Naive thymus-derived CD8-positive, alpha-beta T cell (primary cell): ENCODE measurements at regions of chr2 and their contacts with region 1.

Region 1: DNA sequence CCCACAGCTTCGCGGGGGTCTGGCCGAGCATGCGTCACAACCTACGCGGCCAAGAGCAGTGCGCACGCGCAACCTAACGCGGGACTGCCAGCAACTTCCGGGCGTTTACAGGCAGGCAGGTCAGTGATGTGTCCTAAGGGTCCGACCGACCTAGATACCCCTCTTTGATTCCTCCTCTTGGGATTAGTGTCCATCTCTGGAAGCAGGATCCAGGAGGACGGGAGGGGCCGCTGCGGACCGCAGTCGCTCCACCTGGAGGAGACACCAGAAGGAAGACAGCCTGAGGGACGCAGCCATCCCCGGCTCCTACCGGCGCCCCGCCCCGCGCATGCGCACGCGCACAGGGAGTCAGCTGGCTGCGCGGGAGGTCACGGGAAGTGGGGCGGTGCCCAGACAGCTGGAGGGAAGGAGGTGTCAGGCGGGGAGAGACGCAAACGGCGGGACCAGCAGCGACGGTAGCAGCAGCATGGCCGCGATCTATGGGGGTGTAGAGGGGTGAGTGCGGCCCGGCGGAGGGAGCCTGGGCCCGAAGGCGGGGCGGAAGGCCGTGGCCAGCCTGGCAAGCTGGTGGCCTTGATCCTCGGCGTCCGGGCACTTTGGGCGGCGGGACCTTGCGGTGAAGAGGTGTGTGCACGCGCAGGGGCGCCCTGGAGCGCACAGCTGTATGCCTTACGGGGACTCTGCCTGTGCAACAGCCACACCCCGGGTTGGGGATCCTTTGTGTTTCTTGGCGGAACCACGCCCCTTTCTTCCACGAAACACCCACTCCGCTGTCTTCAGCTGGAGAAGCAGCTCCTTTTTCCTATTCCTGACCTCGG is at the start of gene NAGK:
- DNase-seq: peak; percentile 96 to 100 (median 98)
- ATAC-seq: peak; percentile 81 to 85
- H3K4me3 Mint-ChIP-seq: peak within 1 kb of the TSS; percentile 90 to 99 (median 94)
- H3K27ac Mint-ChIP-seq: peak within 1 kb of the TSS; percentile 98 to 100 (median 99)
- H3K4me1 Mint-ChIP-seq: peaks cover 27 to 84% (median 62%) of the 10 kb centered on the region in 4 donors
- H3K27me3 Mint-ChIP-seq: peaks cover 0 to 1% (median 0%) of the 10 kb centered on the region in 5 donors
- polyA plus RNA-seq, gene NAGK: 33.7 to 51.1 (median 43.6) TPM

Region 2: DNA sequence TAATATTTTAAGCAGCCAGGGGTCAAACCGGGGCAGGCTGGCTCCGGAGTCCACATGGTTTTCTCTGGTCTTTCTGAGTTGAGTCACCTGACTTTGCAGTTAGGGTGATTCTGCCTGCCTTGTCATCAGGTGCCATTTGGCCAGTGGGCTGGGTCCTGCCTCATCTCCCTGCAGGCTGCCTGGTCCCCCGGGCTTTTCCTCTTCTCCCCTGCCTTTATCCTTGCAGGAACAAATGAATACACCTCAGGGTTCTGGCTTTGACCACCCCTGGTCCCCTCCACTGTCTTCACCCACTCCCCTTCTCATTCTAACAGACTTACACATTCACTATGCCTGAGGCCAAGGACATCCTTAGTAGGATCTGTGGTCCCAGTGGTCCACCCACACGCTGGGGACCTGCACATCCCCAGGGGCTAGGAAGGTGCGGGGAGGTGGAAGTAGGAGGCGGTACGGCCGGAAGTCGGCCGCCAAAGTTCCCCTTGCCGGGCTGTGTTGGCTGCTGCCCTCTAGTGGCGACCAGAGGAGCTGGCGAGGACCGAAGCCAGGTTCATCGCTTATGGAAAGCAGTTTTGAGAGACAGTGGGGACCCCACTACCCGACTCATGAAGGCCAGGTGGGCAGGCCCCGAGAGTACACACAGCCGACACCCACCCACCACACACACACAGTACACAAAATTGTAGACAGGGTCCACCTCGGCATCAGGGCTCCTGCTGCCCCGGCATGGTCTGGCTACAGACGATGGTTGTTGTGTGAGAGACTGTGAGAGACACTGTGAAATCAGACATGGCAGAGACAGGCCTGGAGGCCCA is 67.4 kb before region 1 on chr2:
- POLR2A ChIA-PET with region 1: interaction called, 11 read pairs
- DNase-seq: peak; percentile 65 to 87 (median 78)
- ATAC-seq: peak; percentile 96 to 99
- H3K4me3 Mint-ChIP-seq: peak overlapping the region; percentile 3 to 76 (median 53)
- H3K27ac Mint-ChIP-seq: peak overlapping the region in 9 of 10 donors; percentile 43 to 91 (median 80)
- H3K4me1 Mint-ChIP-seq: peaks cover 0 to 12% (median 7%) of the 10 kb centered on the region in 4 donors
- H3K27me3 Mint-ChIP-seq: peaks cover 1 to 8% (median 6%) of the 10 kb centered on the region in 5 donors

Region 3: DNA sequence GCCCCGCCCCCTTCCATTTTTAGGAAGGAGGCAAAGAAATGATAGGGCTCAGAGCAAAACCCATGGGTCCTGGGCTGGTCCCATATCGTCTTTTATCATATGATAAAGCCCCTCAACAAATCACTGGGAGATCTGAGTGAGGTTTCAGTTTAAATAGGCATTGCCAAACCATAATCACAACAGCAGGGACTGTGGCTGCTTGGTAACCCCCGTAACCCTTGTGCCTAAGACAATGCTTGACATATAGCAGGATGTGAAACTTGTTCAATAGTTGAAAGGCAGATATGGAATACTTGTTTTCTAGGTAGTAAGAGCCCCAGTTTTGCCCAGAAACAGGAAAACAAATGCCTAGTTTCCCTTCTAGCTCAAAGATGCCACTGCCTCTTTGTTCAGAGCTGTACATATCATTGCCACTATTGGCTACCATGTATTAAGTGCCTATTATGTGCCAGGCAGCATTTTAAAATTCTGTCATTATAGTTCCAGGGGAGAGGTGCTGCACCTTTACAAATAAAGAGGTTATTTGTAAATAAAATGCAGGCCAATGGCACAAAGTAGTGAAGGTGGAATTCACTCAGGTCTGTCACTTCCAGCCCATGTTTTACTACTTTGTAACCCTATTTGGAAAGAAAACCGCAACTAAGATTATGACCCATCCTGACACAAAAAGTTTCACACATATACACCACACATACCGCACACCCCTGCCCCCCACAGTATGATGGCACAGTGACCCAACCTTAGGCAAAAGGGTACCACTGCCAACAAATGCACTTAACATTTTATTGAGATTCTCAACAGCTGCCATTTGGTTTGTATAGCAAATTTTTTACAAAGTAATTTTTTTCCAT is 14.2 kb after region 1 on chr2:
- POLR2A ChIA-PET with region 1: interaction called, 15 read pairs
- DNase-seq: no peak
- ATAC-seq: no peak
- H3K4me3 Mint-ChIP-seq: peak overlapping the region in 1 of 10 donors; percentile 24
- H3K27ac Mint-ChIP-seq: peak overlapping the region in 7 of 10 donors; percentile 11 to 65 (median 34)
- H3K4me1 Mint-ChIP-seq: peaks cover 2 to 19% (median 12%) of the 10 kb centered on the region in 4 donors
- H3K27me3 Mint-ChIP-seq: peaks cover 0 to 8% (median 3%) of the 10 kb centered on the region in 5 donors

Region 4: DNA sequence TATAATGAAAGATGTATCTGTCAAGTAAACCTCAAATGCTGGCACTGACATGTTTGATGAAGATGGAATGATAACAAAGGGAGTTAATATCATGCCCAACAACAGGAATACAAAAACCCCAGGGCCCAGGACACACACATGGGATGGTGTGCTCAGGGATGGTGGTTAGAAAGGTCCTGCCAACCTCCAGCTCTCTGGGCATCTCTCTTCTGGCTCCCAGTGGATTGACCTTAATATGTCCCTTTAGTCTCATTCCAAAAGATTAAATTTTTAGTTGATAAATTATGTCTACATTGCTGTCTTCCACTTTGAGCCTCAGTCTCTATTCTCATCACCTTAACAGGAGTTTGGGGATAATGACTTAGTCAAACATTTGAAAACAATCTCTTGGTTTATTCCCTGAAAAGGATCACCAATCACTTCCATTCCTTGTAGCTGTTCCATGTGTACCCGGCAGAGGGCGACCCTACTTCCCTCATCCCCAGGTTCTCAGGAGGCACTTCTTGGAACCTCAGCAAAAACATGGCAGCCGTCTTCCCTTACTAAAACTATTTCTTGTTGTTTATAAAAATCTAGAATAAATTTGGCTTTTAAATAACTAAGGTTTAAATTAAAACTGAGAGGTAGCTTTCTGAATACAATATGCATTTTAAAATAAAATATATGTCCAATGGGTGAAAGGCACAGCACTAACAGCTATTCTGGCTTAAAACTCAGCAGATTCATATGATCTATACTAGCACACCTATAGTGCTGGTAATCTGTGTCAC is 32.0 kb after region 1 on chr2:
- POLR2A ChIA-PET with region 1: interaction called, 12 read pairs
- DNase-seq: peak in 8 of 10 donors; percentile 3 to 36 (median 29)
- ATAC-seq: peak; percentile 46 to 61
- H3K4me3 Mint-ChIP-seq: no peak overlapping the region
- H3K27ac Mint-ChIP-seq: no peak overlapping the region
- H3K4me1 Mint-ChIP-seq: peaks cover 0 to 5% (median 2%) of the 10 kb centered on the region in 4 donors
- H3K27me3 Mint-ChIP-seq: peaks cover 0 to 4% (median 1%) of the 10 kb centered on the region in 5 donors

Region 5: DNA sequence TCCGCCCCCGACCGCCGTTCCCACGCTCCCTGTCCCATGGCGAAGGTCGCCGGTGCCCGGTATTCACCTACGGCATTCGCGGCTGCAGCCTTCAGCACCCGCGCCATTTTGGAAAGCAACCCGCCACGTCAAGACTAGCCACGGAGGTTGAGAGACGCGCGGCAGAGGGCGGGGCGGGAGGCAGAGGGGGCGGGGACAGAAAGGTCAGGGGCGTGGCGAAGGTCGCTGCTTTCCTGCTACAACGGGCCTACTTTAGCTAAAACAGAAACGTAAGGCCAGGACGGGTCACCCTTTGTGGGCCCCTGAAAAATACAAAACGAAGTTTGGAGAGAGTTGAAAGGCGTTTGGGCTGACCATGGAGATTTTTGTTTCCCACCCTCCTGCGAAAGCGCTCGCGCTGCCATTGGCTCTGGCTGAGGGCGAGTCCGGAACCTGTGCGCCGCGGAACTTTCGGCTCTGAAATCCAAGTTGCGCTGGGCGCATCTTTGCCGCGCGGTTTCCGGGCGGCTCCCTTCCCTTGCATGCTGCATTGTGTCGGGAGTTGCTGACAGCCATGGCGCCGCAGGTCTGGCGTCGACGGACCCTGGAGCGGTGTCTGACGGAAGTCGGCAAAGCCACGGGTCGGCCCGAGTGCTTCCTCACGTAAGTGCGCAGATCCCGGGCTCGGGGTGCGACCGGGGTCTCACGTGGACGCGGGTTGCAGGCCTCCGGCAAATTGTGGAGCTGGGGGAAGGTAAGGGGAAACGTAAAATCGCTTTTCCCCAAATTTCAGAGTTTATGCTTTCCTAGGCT is 61.9 kb after region 1 on chr2 and contains the starts of genes MCEE and MPHOSPH10:
- POLR2A ChIA-PET with region 1: interaction called, 66 read pairs
- DNase-seq: peak; percentile 80 to 95 (median 86)
- ATAC-seq: peak; percentile 88 to 90
- H3K4me3 Mint-ChIP-seq: no peak within 1 kb of the TSS
- H3K27ac Mint-ChIP-seq: peak within 1 kb of the TSS in 1 of 10 donors; percentile 73
- H3K4me1 Mint-ChIP-seq: peaks cover 7 to 27% (median 19%) of the 10 kb centered on the region in 4 donors
- H3K27me3 Mint-ChIP-seq: no peaks in the 10 kb centered on the region
- polyA plus RNA-seq, gene MCEE: 20.9 to 25.1 (median 22.2) TPM
- polyA plus RNA-seq, gene MPHOSPH10: 21.5 to 33.6 (median 24.1) TPM

Region 6: GRCh38 chr2:71181332-71181731 is 112.9 kb after region 1 on chr2:
- POLR2A ChIA-PET with region 1: no interaction called
- DNase-seq: no peak
- ATAC-seq: no peak
- H3K4me3 Mint-ChIP-seq: no peak overlapping the region
- H3K27ac Mint-ChIP-seq: no peak overlapping the region
- H3K4me1 Mint-ChIP-seq: peaks cover 0 to 5% (median 0%) of the 10 kb centered on the region in 4 donors
- H3K27me3 Mint-ChIP-seq: peaks cover 0 to 16% (median 1%) of the 10 kb centered on the region in 5 donors

Region 7: DNA sequence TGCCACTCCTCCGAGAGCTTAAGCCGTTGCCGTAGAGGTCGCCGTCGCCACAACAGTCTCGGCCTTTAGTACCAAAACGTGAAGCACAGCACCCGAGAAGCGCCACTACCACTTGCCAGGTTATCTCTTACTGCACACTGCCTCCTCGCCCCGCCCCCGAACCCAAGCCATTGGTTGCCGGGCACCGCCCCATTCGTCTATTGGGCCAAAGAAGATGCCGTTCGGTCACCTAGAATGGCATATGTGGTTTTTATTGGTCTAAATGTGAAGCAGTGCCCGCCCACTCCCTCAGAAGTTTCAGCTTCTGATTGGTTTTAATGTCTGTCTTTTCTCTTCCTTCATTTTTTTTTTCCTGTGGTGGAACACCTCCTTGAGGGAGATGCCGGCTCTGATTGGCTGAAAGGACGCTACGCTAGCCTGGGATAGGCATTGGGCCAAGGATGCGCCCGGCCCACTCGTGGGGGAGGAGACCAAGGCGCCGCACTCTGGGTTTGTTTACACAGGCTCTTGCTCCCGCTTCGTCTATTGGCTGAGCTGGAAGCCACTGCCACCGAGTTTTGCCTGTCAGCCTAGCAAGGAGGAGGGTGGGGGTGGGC is 158.6 kb after region 1 on chr2 and contains the start of gene PAIP2B:
- POLR2A ChIA-PET with region 1: interaction called, 18 read pairs
- DNase-seq: peak; percentile 93 to 99 (median 98)
- ATAC-seq: peak; percentile 90 to 91
- H3K4me3 Mint-ChIP-seq: peak within 1 kb of the TSS; percentile 93 to 99 (median 97)
- H3K27ac Mint-ChIP-seq: peak within 1 kb of the TSS; percentile 82 to 99 (median 96)
- H3K4me1 Mint-ChIP-seq: peaks cover 10 to 35% (median 27%) of the 10 kb centered on the region in 4 donors
- H3K27me3 Mint-ChIP-seq: peaks cover 0 to 11% (median 2%) of the 10 kb centered on the region in 5 donors
- polyA plus RNA-seq, gene PAIP2B: 1.9 to 2.5 (median 2.2) TPM